Activated B cell treated with CpG ODN at 0.5 μM for 24 hours (primary cell): ENCODE measurements at regions of chr11 and their contacts with region 1.

Region 1: DNA sequence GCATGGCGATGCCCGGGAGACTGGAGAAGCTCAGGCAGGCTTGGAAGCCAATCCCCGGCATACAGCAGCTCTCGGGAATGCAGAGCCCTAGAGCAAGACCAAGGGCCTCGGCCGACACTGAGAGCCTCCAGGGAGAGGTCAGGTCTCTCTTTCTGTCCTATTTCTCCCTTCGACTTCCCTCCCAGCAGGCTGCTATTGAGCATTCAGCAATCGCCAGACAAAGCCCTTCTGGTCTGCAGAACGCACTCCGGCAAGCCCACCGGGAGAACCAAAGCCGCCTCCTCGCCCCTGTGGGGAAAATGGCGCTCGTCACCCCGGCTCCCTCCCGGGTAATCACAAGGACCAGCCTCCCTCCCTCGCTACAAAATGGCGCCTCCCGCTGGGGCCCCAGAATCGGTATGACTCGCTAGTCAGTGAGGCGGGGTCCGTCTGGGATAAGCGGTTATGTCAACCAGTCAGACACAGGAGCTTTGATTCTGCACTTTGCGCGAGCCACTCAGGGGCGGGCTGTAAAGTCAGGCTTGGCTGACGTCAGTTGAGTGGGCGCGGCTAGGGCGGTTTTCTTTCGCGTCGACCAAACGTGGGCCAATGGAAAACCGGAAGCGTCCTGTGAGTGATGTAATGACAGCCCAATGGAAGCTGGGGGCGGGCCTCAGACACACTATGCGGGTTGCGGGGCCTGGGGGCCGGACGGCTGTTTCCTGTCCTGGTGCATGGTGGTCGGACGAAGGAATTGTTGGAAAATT is at the start of gene ZNF143:
- DNase-seq: peak; percentile 99
- ATAC-seq: peak; percentile 85
- H3K4me3 Mint-ChIP-seq: peak within 1 kb of the TSS; percentile 97
- H3K27ac Mint-ChIP-seq: peak within 1 kb of the TSS; percentile 98
- H3K4me1 Mint-ChIP-seq: peaks cover 30% of the 10 kb centered on the region
- H3K27me3 Mint-ChIP-seq: no peaks in the 10 kb centered on the region
- CTCF ChIP-seq: no peak
- total RNA-seq, gene ZNF143: 37.8 and 41.1 TPM in 2 replicates

Region 2: DNA sequence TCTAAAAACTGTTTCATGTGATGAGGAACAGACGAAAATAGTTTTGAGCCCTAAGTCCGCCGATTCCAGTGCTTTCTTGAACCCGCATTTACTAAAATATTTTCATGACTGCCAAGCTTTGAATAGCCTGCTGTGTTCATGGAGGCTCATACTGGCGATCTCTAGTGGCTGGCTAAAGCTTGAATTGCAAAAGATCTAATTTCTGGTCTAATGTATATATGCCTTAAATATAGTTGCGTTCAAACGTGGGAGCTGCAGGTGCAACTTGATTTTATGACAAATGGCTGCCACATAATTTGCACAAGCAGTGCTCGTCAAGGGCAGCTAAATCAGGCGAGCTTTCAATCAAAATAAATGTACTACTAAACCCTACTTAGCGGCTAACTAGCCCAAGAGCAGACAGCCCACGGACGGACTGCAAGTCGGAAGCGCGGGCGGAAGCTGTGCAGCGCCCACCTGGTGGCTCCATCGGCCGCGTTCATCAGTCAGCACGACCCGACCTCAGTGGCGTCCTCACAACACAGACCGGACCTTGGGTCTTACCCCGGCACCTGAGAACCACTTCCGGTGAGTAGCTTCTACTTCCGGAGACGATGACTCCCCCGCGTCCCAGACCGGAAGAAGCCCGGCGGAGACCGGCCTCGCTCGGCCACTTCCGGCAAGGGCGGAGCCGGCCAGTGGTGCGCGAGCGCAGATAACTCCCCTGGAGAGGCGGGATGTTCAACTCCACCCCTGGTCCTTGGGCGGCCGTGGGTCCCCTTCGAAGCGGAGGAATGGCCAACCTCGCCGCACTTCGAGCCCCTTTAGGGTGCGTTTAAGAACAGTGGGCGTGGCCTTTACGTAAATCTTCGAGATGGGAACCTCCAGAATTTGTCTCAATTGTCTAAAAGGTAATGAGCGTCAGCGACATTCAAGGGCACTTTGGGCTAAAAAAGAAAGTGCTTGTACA is 771.8 kb before region 1 on chr11:
- CTCF ChIA-PET with region 1: no interaction called
- POLR2A ChIA-PET with region 1: interaction called, 3 read pairs
- intact Hi-C with region 1: loop called (anchors 1 kb)
- DNase-seq: peak; percentile 84
- ATAC-seq: peak; percentile 90
- H3K4me3 Mint-ChIP-seq: peak overlapping the region; percentile 97
- H3K27ac Mint-ChIP-seq: peak overlapping the region; percentile 95
- H3K4me1 Mint-ChIP-seq: peaks cover 49% of the 10 kb centered on the region
- H3K27me3 Mint-ChIP-seq: no peaks in the 10 kb centered on the region
- CTCF ChIP-seq: no peak

Region 3: GRCh38 chr11:9314291-9315036 is 146.0 kb before region 1 on chr11 and contains the start of gene TMEM41B:
- CTCF ChIA-PET with region 1: no interaction called
- POLR2A ChIA-PET with region 1: interaction called, 33 read pairs
- intact Hi-C with region 1: loop called (anchors 1 kb)
- DNase-seq: peak; percentile 100
- ATAC-seq: peak; percentile 96
- H3K4me3 Mint-ChIP-seq: peak within 1 kb of the TSS; percentile 98
- H3K27ac Mint-ChIP-seq: peak within 1 kb of the TSS; percentile 95
- H3K4me1 Mint-ChIP-seq: peaks cover 49% of the 10 kb centered on the region
- H3K27me3 Mint-ChIP-seq: peaks cover 4% of the 10 kb centered on the region
- CTCF ChIP-seq: no peak
- total RNA-seq, gene TMEM41B: 19.4 and 21.7 TPM in 2 replicates

Region 4: GRCh38 chr11:9448576-9449352 is 11.7 kb before region 1 on chr11:
- CTCF ChIA-PET with region 1: no interaction called
- POLR2A ChIA-PET with region 1: interaction called, 15 read pairs
- intact Hi-C with region 1: no loop called
- DNase-seq: no peak
- ATAC-seq: no peak
- H3K4me3 Mint-ChIP-seq: no peak overlapping the region
- H3K27ac Mint-ChIP-seq: no peak overlapping the region
- H3K4me1 Mint-ChIP-seq: no peaks in the 10 kb centered on the region
- H3K27me3 Mint-ChIP-seq: no peaks in the 10 kb centered on the region
- CTCF ChIP-seq: no peak

Region 5: GRCh38 chr11:9573052-9573774 is 112.7 kb after region 1 on chr11 and contains the start of gene WEE1:
- CTCF ChIA-PET with region 1: no interaction called
- POLR2A ChIA-PET with region 1: interaction called, 27 read pairs
- intact Hi-C with region 1: loop called (anchors 2 kb)
- DNase-seq: peak; percentile 97
- ATAC-seq: peak; percentile 90
- H3K4me3 Mint-ChIP-seq: peak within 1 kb of the TSS; percentile 95
- H3K27ac Mint-ChIP-seq: peak within 1 kb of the TSS; percentile 85
- H3K4me1 Mint-ChIP-seq: peaks cover 69% of the 10 kb centered on the region
- H3K27me3 Mint-ChIP-seq: no peaks in the 10 kb centered on the region
- CTCF ChIP-seq: no peak
- total RNA-seq, gene WEE1: 29.4 and 33.7 TPM in 2 replicates

Region 6: DNA sequence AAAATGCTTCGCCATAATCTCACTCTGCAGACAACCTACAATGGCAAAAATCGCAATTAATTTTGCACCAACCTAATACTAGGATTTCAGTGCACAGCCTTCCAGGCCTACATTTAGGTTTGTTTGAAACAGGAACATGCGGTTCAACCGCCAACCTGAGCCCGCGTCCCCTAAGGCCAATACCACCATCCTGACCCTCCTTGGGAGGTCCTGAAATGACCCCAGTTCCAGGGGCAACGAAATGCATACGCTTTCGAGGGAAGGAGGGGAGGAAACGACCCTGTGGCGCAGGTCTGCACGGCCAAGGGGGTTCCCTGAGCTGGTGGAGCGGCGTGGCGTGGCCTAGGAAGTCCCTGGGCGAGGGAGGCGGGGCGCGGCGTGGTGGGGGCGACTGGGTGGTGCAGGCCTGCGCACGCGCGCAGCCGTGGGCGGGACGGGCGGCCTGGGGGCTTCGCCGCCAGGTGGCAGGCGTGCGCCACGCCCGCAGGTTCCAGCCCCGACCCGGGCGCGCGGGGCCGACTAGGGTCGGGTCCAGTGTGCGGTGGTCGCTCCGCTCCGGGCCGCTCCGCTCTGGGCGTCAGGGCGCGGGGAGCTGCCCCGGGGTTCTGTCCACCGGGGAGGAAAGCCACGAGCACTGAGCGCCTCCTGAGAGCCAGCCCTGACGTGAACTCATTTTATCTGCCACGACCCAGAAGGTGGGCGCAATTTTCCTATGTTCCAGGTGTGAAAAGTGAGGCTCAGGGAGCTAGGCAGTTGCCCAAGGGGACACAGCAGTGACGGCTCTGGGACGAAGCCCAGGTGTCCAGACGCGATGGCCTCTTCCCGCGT is 297.5 kb after region 1 on chr11:
- CTCF ChIA-PET with region 1: no interaction called
- POLR2A ChIA-PET with region 1: interaction called, 10 read pairs
- intact Hi-C with region 1: loop called (anchors 2 kb)
- DNase-seq: peak; percentile 96
- ATAC-seq: peak; percentile 59
- H3K4me3 Mint-ChIP-seq: peak overlapping the region; percentile 87
- H3K27ac Mint-ChIP-seq: peak overlapping the region; percentile 98
- H3K4me1 Mint-ChIP-seq: peaks cover 81% of the 10 kb centered on the region
- H3K27me3 Mint-ChIP-seq: no peaks in the 10 kb centered on the region
- CTCF ChIP-seq: peak; percentile 47

Region 7: GRCh38 chr11:10762185-10762584 is 1301.7 kb after region 1 on chr11:
- CTCF ChIA-PET with region 1: no interaction called
- POLR2A ChIA-PET with region 1: no interaction called
- intact Hi-C with region 1: loop called (anchors 5 kb)
- DNase-seq: no peak
- ATAC-seq: peak; percentile 73
- H3K4me3 Mint-ChIP-seq: peak overlapping the region; percentile 30
- H3K27ac Mint-ChIP-seq: peak overlapping the region; percentile 65
- H3K4me1 Mint-ChIP-seq: peaks cover 29% of the 10 kb centered on the region
- H3K27me3 Mint-ChIP-seq: no peaks in the 10 kb centered on the region
- CTCF ChIP-seq: no peak